PC-3 (cell line): ENCODE measurements at regions of chr4 and their contacts with region 1.

Region 1: DNA sequence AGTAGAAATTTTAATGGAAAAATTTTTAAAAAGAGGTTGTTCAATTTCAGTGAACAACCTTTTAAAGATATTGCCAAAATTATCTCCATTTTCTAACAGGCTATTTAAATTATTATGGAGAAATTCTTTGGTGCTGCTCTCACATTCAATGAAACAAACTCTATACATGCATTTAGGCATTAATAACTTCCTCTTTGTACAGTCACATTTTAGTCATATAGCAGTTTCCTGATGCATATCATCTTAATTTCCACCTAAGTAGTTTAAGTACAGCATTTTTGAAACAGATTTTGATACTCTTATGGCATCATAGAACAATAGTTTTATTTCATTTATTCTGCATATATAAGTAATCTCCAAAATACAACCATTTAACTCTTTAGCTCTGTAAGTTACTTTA is 500.1 kb downstream of the STPG2 start:
- DNase-seq: peak; percentile 55
- ATAC-seq: peak; percentile 69; the same call in 1 of the 2 replicates
- H3K4me3 ChIP-seq: no peak overlapping the region
- H3K27ac ChIP-seq: no peak overlapping the region
- H3K4me1 ChIP-seq: peaks cover 18% of the 10 kb centered on the region
- H3K27me3 ChIP-seq: no peaks in the 10 kb centered on the region
- CTCF ChIP-seq: no peak

Region 2: DNA sequence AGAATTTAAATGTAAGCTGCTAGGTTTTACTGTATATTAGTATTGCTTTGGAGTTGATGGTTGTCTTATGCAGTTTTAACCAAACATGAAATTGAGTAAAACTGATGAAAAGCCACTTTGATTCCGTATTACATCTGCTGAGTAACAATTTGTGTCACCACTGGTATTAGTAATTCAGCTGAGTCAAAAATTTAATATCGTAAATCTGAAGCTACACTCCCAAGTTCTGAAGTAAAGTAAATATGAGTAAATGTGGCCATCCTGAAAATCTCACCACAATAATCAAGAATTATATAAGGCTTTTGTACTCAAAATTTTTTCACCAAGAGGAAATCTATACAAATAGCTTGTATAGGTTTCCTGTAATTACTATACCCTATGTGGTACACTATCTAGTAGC is 357.8 kb after region 1 on chr4:
- CTCF ChIA-PET with region 1: no interaction called
- POLR2A ChIA-PET with region 1: no interaction called
- intact Hi-C with region 1: loop called (anchors 5 kb)
- DNase-seq: peak; percentile 79
- ATAC-seq: peak; percentile 89
- H3K4me3 ChIP-seq: peak overlapping the region; percentile 14; the same call in 1 of the 2 replicates
- H3K27ac ChIP-seq: peak overlapping the region; percentile 91
- H3K4me1 ChIP-seq: peaks cover 30% of the 10 kb centered on the region
- H3K27me3 ChIP-seq: no peaks in the 10 kb centered on the region
- CTCF ChIP-seq: no peak